Posterior vena cava (tissue), 2 donors: ENCODE measurements at regions of chr15 and their contacts with region 1.

Region 1: DNA sequence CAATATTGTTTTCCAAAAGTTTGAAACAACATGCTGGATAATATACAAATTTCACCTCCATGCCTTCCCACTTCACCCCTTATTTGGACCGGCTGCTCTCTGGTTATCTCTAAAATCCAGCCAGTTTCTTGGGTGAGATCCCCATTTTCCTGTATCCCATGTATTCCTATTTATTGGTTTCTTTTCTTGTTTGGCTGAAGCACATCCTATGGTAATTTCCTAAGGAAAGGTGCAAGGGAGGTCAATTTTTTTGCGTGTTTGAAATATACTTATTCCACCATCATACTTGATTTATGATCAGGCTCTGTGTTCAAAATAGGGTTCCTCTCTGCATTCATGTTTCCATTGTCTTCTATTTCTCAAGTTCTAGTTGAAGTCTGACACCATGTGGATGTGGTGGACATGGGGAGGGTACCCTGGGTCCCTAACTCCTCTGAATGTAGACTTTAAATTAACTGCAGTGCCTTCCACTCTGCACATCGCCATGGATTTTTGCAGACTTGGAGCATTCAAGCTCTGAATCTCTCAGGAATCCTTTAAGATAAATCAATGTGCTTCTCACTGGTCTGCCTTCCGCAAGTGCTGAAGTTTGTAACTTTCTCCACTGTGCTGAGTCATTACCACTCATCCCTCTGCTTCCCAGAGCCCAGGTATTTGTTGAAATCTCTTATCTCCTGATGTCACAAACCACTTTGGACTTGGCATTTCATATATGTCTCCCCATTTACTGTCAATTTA is 52.1 kb upstream of the TLE3 start:
- DNase-seq: no peak

Region 2: DNA sequence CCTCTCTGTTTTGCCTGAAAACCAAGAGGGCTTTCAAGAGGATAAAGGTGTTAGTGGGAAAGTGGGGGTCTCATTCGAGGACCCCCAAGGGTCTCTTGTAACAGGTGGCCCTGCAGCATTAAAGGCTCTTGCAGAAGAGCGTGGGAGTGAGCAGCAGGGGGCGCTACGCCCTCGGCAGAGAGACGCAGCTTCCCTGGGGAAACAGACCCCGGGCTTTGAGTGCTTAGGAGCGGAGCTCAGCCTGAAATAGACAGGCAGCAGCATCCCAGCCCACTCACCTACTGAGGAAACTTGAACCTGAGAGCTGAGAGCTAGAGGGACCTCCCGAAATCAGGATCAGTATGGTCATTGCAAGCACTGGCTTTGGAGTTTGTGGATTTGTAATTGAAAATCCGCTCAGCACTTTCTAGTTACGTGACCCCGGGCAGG is 671.6 kb before region 1 on chr15:
- intact Hi-C with region 1: loop called in 1 of 2 experiments (anchors 5 kb)
- DNase-seq: no peak

Region 3: DNA sequence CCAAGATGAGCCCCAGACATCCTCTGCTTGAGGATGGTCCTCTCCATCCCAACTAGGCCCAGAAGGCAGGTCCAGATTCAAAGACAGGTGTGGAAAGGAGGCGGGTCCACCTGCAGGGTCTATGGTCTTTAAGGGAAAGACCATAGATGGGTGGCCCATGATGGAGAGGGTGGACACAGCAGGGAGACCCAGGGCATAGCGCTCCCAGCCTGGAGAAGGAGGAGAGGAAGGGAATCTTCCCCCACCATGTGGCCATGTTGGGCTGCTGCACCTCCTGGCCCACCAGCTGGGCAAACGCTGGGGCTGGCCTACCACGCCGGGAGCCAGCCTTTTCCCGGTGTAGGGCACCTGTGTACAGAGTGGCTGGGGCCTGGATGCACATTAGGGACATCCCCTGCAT is 213.1 kb after region 1 on chr15:
- intact Hi-C with region 1: no loop called
- DNase-seq: peak; percentile 77